T-cell (primary cell): ENCODE measurements at regions of chr12 and their contacts with region 1.

Region 1: DNA sequence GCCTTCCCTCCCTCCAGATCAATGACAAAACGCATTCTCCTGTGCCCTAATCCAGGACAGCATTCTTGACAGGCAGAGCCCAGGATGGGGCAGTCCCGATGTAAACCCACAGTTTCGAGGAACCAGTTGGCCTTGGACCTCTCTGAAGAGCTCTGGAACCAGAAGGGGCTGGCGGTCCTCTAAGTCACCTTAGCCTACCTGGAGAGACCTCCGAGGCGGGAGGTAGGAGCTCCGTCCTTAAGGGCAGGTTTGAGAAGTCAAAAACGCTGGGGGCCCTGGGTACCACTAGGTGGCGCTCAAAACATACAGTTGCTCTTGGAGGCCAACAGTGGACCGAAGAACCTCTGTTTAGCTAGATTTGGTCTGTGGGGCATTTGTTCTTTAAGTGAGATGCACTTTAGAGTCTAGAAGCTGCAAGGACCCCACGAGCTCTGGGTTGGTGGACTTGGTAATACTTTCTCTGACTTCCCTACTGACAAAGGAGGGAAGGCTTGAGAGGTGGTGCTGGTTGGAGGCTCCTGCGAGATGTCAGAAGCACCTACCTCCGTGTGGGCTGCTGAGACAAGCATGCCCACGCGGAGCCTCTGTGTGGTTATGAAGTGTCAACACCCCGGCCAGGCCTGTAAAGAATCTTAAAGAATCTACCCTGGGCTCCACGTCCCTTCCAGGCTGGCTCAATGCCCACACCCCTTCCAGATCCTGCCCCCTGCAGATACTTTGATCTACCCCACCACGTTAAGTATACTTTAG is 74.8 kb upstream of the CHST11 start:
- DNase-seq: peak; percentile 53 to 90 (median 76)
- ATAC-seq: peak; percentile 82 to 92 (median 83)
- H3K4me3 ChIP-seq: no peak overlapping the region
- H3K4me3 Mint-ChIP-seq: no peak overlapping the region
- H3K27ac ChIP-seq: no peak overlapping the region
- H3K27ac Mint-ChIP-seq: no peak overlapping the region
- H3K4me1 ChIP-seq: peaks cover 0 to 9% of the 10 kb centered on the region in 2 experiments
- H3K4me1 Mint-ChIP-seq: peaks cover 10 to 13% (median 10%) of the 10 kb centered on the region in 3 donors
- H3K27me3 ChIP-seq: peaks cover 0 to 4% of the 10 kb centered on the region in 2 experiments
- H3K27me3 Mint-ChIP-seq: peaks cover 5 to 6% of the 10 kb centered on the region in 2 donors

Region 2: DNA sequence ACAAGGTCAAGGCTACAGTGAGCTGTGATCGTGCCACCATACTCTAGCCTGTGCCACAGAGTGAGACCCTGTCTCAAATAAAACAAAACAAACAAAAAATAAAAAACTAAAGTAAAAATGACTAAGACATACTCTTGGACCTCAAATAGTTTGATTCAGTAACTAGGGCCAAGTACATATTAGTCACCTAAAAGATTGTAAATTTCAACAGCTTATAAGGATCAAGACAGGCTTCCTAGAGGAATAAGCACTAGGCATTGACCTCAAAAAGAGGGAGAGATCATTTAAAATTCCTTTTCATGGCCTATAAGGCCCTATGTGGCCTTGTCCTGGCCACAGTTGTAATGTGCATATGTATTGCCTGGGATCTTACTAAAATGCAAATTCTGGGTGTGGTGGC is 28.9 kb after region 1 on chr12:
- CTCF ChIA-PET with region 1: no interaction called
- POLR2A ChIA-PET with region 1: no interaction called
- DNase-seq: no peak
- ATAC-seq: no peak
- H3K4me3 ChIP-seq: no peak overlapping the region
- H3K4me3 Mint-ChIP-seq: no peak overlapping the region
- H3K27ac ChIP-seq: no peak overlapping the region
- H3K27ac Mint-ChIP-seq: no peak overlapping the region
- H3K4me1 ChIP-seq: no peaks in the 10 kb centered on the region
- H3K4me1 Mint-ChIP-seq: no peaks in the 10 kb centered on the region
- H3K27me3 ChIP-seq: peaks cover 0 to 2% of the 10 kb centered on the region in 2 experiments
- H3K27me3 Mint-ChIP-seq: peaks cover 0 to 4% of the 10 kb centered on the region in 2 donors

Region 3: DNA sequence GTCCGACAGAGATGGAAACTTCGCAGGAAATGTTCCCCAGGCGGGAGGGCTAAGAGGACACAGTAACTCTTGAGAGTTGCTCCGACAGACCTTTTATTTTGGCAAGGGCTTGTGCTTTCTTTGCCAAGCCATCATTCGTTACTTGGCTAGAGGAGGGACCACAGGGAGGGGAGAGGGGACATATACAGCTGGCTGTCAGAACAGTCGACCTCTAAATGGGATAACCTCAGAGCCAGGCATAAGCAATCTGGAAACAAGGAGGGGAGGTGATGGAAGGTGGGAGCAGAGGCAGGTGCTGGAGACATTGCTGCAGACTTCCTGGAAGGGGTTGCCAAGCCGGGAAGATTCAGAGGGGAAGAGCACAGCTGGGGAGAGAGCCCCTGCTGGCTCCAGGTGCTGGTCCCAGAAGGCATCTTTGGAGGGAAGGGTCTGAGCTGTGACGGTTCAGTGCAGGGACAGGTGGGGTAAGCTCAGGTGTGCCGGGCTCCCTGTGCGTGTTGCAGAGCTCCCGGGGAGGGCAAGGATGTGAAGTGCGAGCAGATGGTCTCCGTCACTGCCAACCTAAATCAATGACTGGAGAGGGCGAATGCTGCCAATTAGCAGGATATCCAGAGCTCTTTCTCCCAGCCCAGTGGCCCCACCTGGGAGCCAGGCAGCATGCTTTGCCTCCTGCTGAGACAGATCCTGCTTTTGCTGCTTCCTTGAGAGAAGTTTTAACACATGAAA is 124.9 kb after region 1 on chr12:
- CTCF ChIA-PET with region 1: no interaction called
- POLR2A ChIA-PET with region 1: no interaction called
- DNase-seq: no peak
- ATAC-seq: no peak
- H3K4me3 ChIP-seq: no peak overlapping the region
- H3K4me3 Mint-ChIP-seq: no peak overlapping the region
- H3K27ac ChIP-seq: no peak overlapping the region
- H3K27ac Mint-ChIP-seq: no peak overlapping the region
- H3K4me1 ChIP-seq: peaks cover 11 to 67% of the 10 kb centered on the region in 2 experiments
- H3K4me1 Mint-ChIP-seq: peaks cover 77 to 97% (median 93%) of the 10 kb centered on the region in 3 donors
- H3K27me3 ChIP-seq: no peaks in the 10 kb centered on the region
- H3K27me3 Mint-ChIP-seq: no peaks in the 10 kb centered on the region

Region 4: GRCh38 chr12:104877123-104877705 is 495.3 kb after region 1 on chr12:
- CTCF ChIA-PET with region 1: interaction called, 6 to 11 read pairs
- POLR2A ChIA-PET with region 1: no interaction called
- DNase-seq: peak in 29 of 35 experiments; percentile 2 to 56 (median 19)
- ATAC-seq: no peak
- H3K4me3 ChIP-seq: no peak overlapping the region
- H3K4me3 Mint-ChIP-seq: no peak overlapping the region
- H3K27ac ChIP-seq: no peak overlapping the region
- H3K27ac Mint-ChIP-seq: no peak overlapping the region
- H3K4me1 ChIP-seq: no peaks in the 10 kb centered on the region
- H3K4me1 Mint-ChIP-seq: peaks cover 0 to 6% (median 0%) of the 10 kb centered on the region in 3 donors
- H3K27me3 ChIP-seq: no peaks in the 10 kb centered on the region
- H3K27me3 Mint-ChIP-seq: peaks cover 1 to 8% of the 10 kb centered on the region in 2 donors

Region 5: DNA sequence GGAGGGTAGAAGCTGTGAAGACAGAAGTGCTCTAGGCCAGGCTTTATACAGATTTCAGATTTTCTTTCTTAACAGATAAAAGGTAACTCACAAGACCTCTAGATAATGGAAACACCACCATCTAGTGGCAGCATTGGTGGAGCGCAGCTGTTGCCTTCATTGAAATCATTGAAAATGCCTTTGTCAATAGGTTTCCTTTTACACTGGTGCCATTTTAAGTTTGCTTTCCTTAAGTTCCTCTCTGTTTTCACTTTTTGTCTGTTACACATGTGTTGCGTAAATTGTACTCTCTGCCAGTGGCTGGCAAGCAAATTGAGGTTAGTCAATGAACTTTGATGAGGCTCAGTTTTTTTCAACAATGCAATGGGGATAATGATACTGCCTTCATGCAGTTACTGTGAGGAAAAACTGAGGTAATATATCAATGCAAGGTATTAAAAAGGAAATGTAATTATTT is 671.2 kb after region 1 on chr12:
- CTCF ChIA-PET with region 1: interaction called, 24 to 56 read pairs
- POLR2A ChIA-PET with region 1: no interaction called
- DNase-seq: peak; percentile 39 to 86 (median 67)
- ATAC-seq: peak; percentile 71 to 81 (median 76)
- H3K4me3 ChIP-seq: no peak overlapping the region
- H3K4me3 Mint-ChIP-seq: no peak overlapping the region
- H3K27ac ChIP-seq: no peak overlapping the region
- H3K27ac Mint-ChIP-seq: no peak overlapping the region
- H3K4me1 ChIP-seq: no peaks in the 10 kb centered on the region
- H3K4me1 Mint-ChIP-seq: peaks cover 0 to 2% (median 1%) of the 10 kb centered on the region in 3 donors
- H3K27me3 ChIP-seq: no peaks in the 10 kb centered on the region
- H3K27me3 Mint-ChIP-seq: no peaks in the 10 kb centered on the region